Thyroid gland (tissue), 4 donors: ENCODE measurements at regions of chr20 and their contacts with region 1.

Region 1: DNA sequence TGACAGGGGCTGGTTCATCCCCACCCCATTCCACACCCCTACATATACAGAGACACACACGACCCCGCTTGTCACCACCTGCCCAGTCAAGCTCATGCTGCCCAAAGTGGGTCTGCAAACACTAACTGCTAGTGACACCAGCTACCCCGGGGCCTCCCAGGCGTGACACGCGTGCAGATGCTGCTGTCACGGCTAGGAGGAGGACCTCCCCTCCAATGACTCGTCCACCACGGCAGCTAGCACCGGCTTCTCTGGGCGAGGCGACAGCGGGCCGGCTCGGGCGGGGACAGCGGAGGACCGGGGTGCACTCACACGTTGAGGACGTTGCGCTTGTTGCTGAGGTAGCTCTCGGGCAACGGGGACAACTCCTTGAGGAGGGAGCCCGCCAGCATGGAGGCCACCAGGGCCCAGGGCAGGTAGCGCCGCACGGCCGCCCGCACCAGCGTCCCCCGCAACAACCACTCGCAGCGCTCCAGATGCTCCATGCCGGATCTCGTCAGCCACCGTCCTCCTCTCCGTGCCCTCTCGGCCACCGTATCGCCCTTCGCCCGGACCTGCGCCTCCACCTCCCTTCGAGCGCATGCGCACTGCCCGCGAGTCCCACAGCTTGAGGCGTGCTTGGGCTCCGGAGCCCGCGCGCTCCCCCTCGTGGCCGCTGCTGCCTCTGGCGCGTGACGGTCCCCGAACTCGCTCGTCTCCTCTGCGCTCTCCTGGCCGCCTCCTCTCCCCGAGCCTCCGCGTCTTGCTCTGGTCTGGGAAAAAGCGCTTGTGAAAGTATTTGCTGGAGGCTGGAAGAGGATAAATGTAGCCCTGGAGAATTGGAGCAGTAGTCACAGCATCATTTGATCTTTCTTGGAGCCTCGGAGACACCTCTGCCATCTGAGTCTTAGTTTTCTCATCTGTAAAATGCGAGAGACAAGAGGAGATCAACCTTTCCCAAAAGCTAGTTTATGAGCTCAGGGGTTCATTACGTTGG is at the start of gene FITM2:
- DNase-seq: peak; percentile 98 to 99
- H3K4me3 ChIP-seq: peak within 1 kb of the TSS; percentile 78 to 99 (median 88)
- H3K27ac ChIP-seq: peak within 1 kb of the TSS; percentile 11 to 80 (median 78)
- H3K4me1 ChIP-seq: peaks cover 10 to 12% of the 10 kb centered on the region in 2 donors
- H3K27me3 ChIP-seq: no peaks in the 10 kb centered on the region
- CTCF ChIP-seq: peak; percentile 85 to 98 (median 93)
- POLR2A ChIP-seq: peak in 1 of 2 donors; percentile 68
- total RNA-seq, gene FITM2: 8.3 to 14.2 (median 12.6) TPM

Region 2: DNA sequence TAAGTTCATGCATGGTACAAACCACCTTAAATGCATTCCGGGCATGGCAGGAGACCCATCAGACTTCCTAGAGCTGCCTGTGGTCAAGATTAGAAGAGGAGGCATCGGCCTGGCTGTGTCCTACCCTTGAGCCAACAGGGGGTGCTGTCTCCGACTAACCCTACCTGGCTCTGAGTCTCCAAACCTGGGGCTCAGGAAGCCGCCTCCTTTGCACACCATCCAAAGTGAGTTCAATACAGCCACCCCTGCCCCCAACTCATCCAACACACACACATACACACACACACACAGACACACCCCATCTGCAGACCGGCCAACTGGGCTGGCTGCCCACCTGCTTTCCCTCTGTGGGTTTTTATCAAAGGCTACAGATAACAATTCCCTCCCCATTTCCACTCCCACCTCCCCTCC is 201.0 kb before region 1 on chr20:
- intact Hi-C with region 1: loop called (anchors 10 kb)
- DNase-seq: no peak
- H3K4me3 ChIP-seq: no peak overlapping the region
- H3K27ac ChIP-seq: no peak overlapping the region
- H3K4me1 ChIP-seq: no peaks in the 10 kb centered on the region
- H3K27me3 ChIP-seq: no peaks in the 10 kb centered on the region
- CTCF ChIP-seq: no peak
- POLR2A ChIP-seq: no peak

Region 3: DNA sequence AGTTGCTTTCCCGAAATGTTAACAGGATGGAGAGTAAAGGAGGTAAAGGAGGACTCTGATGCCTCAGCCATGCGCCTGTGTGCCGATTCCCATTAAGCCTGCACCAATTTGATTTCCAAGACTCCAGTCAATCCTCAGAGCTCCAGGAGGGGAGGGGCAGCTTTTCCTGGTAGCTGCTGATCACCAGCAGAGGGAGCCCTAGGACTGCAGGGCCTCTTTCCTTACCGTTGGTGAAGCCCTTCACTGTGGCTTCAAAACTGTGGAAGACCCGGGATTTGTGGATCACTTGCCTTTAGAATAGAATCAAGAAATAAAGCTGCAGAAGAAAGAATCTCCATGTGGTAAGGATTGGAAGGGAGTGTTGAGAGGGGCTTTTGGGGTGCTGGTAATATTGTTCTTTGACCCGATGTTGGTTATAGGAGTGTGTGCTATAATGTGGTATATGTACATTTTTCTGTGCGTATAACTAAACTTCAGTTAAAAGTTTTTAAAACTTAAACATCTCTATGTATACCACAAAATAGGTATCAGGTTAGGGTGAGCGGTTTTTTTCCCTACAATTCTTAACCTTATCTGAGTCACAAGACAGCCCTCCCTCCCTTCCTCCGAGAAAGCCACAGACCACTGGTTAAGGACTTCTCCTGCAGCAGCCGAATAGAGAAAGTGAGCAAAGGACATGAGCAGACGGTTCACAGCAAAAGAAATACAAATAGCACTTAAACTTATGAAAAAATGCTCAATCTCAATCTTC is 93.4 kb before region 1 on chr20:
- intact Hi-C with region 1: loop called (anchors 2 kb)
- DNase-seq: peak; percentile 67 to 69
- H3K4me3 ChIP-seq: no peak overlapping the region
- H3K27ac ChIP-seq: no peak overlapping the region
- H3K4me1 ChIP-seq: no peaks in the 10 kb centered on the region
- H3K27me3 ChIP-seq: no peaks in the 10 kb centered on the region
- CTCF ChIP-seq: peak in 5 of 6 experiments; percentile 48 to 84 (median 79)
- POLR2A ChIP-seq: no peak